ENCODE measurements at regions of chr3 and their contacts with region 1.

Region 1: DNA sequence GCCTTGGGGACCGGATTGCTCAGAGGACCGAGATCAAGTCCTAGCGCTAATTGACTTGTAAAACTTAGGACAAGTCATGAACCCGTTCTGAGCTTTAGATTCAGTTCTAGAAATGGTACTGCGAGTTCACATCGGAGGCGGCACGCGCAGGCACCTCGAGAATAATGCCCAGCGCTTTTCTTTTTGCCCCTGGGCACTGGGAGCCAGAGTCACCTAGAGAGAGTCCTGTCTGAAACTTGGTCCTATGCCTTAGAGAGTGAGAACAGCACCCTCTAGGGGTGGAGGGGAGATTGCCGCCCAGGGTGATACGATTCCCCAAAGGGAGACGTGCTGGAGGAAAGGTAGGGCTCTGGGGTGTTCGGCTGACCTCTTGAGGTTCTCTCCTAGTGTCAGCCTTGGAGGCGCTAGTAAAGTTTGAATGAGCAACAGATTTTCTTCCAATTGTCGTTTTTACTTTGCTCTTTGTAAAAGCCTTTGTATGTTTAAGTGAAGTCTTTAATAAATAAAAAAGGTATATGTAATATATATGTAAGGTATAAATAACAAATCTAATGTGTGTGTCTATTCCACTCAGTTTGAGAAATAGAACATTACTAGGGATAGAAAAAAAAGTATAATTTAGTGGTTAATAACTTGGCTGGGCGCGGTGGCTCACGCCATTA is 826 bp downstream of the EEF1AKMT4 start:
- H3K4me3 Mint-ChIP-seq: peak overlapping the region; percentile 93
- H3K27ac Mint-ChIP-seq: peak overlapping the region; percentile 99
- H3K4me1 Mint-ChIP-seq: peaks cover 27% of the 10 kb centered on the region
- H3K27me3 Mint-ChIP-seq: no peaks in the 10 kb centered on the region

Region 2: GRCh38 chr3:183884427-183885296 is 365.6 kb before region 1 on chr3 and contains the start of gene PARL:
- intact Hi-C with region 1: loop called (anchors 2 kb)
- H3K4me3 Mint-ChIP-seq: peak within 1 kb of the TSS; percentile 91
- H3K27ac Mint-ChIP-seq: peak within 1 kb of the TSS; percentile 94
- H3K4me1 Mint-ChIP-seq: peaks cover 41% of the 10 kb centered on the region
- H3K27me3 Mint-ChIP-seq: peaks cover 9% of the 10 kb centered on the region

Region 3: GRCh38 chr3:184017672-184018423 is 232.4 kb before region 1 on chr3 and contains the start of gene ABCC5:
- intact Hi-C with region 1: loop called (anchors 5 kb)
- H3K4me3 Mint-ChIP-seq: peak within 1 kb of the TSS; percentile 98
- H3K27ac Mint-ChIP-seq: peak within 1 kb of the TSS; percentile 94
- H3K4me1 Mint-ChIP-seq: peaks cover 45% of the 10 kb centered on the region
- H3K27me3 Mint-ChIP-seq: peaks cover 3% of the 10 kb centered on the region

Region 4: DNA sequence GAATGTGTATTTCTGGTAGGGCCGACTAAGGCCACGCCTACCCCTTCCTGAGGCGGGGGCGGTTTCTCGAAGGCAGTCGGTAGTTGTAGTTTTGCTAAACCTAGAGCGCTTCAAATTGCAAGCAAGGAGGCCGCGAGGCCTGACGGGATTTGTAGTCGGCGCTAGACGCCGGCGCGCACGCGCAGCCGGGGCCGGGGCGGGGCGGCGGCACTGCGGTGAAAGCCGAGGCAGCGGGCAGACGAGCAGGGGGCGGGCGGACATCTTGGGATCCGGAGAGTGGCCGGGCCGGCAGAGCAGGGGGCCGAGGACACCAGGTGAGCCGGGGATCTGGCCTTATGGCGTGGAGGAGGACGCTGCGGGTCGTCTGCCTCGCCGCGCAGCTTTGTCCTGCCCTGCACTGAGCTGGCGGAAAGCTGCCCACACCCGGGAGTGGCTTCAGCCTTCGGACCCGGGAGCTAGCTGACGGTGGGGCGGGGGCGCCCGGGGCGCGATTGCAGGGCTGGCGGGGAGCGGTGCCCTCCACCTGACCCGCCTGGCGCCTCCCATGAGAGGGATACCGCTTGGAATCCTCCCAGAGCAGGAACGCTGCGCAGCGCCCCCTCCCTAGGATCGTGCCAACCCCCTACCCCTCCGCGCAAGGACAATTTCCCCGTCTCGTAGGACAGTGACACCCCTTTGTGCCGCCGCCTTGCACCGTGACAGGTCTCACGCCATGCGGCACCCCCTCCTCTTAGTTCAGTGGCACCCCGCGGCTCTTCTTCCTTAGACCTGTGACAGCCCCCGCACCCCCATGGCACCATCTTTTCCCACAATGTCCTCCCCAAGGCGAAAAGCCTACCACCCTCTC is 75.4 kb before region 1 on chr3 and contains the start of gene AP2M1:
- intact Hi-C with region 1: loop called (anchors 1 kb)
- H3K4me3 Mint-ChIP-seq: peak within 1 kb of the TSS; percentile 99
- H3K27ac Mint-ChIP-seq: peak within 1 kb of the TSS; percentile 98
- H3K4me1 Mint-ChIP-seq: peaks cover 54% of the 10 kb centered on the region
- H3K27me3 Mint-ChIP-seq: no peaks in the 10 kb centered on the region

Region 5: DNA sequence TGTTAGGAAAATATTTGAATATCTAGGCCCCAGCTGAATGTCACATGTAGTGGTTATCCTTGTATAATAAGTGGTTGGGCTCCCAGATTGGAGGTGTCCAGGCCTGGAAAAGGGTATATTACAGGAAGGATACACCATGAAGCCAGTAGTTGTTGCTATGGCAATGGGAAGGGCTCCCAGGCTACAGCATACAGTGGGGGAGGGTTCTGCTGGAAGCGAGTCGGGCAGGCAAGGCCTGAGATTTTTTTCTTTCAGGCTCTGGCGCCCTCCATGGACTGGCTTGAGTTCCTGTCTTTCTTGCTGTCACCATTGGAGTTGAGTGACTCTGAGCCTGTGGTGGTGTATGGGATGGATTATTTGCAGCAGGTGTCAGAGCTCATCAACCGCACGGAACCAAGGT is 34.4 kb after region 1 on chr3:
- intact Hi-C with region 1: no loop called
- H3K4me3 Mint-ChIP-seq: no peak overlapping the region
- H3K27ac Mint-ChIP-seq: no peak overlapping the region
- H3K4me1 Mint-ChIP-seq: peaks cover 14% of the 10 kb centered on the region
- H3K27me3 Mint-ChIP-seq: peaks cover 33% of the 10 kb centered on the region

Region 6: DNA sequence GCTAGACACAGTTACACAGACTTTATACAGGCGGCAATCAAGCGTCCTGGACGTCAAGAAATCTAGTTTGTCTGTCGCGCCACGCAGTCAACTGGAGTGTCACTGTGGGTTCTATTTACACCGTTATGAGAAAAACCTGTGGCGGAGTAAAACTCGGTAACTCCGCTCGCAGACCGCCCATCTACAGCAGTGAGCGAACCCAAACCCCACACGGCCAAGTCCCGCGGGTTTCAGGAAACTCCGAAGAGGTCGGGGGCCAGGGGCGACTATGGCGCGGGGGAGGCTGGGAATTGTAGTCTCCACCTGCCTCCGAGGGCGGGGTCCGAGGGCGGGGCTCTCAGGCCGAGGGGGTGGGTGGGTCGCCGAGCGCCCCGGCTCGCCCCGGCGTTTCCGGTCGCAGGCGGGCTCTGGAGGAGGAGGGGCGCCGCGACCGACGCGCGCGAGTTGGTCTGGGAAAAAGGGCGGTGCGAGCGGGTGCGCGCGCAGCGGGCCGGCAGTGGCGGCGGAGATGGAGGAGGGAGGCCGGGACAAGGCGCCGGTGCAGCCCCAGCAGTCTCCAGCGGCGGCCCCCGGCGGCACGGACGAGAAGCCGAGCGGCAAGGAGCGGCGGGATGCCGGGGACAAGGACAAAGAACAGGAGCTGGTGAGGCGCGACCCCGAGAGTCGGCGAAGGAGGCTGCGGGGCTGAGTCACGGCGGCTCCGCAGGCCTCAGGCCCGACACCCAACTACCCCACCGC is 48.6 kb after region 1 on chr3 and contains the start of gene PSMD2:
- intact Hi-C with region 1: loop called (anchors 2 kb)
- H3K4me3 Mint-ChIP-seq: peak within 1 kb of the TSS; percentile 98
- H3K27ac Mint-ChIP-seq: peak within 1 kb of the TSS; percentile 91
- H3K4me1 Mint-ChIP-seq: peaks cover 31% of the 10 kb centered on the region
- H3K27me3 Mint-ChIP-seq: peaks cover 3% of the 10 kb centered on the region

Measured in dendritic cell treated with granulocyte-macrophage colony-stimulating factor and Interleukin-4, amounts not matched to agents 40 ng/mL and 50 ng/mL, for 4 days (primary cell).